Posterior vena cava (tissue), 2 donors: ENCODE measurements at regions of chr4 and their contacts with region 1.

Region 1: DNA sequence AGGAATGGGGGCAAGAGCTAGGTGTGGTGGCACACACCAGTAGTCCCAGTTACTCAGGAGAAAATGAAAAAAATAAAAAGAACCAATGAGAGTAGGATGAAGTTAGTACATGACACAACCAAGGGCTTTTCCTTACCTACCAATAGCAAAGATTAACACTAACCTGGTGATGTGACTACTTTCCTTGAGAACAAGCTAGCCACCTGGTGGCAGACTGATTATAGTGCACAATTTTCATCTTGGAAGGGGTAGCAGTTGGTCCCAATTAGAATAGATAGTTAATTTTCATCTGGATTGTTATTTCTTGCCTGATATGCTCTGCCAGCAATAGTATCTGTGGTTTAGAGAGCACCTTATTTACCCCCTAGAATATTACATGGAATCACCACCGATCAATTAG is 1216.8 kb upstream of the PABPC4L start:
- DNase-seq: no peak

Region 2: DNA sequence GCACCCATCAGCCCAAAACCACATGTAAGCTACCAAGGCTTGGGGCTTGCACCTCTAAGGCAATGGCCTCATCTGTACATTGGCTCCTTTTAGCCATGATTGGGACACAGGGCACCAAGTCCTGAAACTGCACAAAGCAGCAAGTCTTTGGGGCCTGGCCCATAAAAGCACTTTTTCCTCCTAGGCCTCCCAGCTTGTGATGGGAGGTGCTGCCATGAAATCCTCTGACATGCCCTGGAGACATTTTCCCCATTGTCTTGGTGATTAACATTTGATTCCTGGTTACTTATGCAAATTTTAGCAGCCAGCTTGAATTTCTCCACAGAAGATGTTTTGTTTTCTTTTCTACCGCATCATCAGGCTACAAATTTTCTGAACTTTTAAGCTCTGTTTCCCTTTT is 1158.2 kb before region 1 on chr4:
- intact Hi-C with region 1: loop called in 1 of 2 experiments (anchors 5 kb)
- DNase-seq: no peak

Region 3: DNA sequence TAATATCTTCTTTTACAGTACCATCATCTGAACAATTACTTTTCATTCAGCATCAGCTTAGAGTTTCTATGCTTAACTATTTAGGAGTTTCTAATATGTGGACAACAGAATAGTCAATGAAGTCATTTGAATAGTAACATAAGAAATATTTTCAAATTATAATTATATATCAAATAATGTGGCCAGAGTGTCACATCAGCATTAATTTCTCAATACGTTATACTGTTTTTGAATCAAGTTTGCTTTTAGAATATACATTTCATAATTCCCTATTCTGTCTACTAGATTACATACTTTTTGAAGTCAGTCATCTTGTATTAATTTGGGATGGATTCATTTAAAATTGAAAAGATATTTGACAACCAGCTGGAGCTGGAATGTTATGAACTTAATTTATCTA is 539.3 kb before region 1 on chr4:
- intact Hi-C with region 1: no loop called
- DNase-seq: no peak

Region 4: GRCh38 chr4:135319680-135320079 is 98.7 kb before region 1 on chr4:
- intact Hi-C with region 1: no loop called
- DNase-seq: no peak